HepG2 (cell line): ENCODE measurements at regions of chr11 and their contacts with region 1.

Region 1: GRCh38 chr11:112289588-112290492 is 29.2 kb upstream of the PLET1 start:
- DNase-seq: peak; percentile 21
- ATAC-seq: peak; percentile 99
- H3K4me3 ChIP-seq: peak overlapping the region; percentile 51 to 77 (median 56)
- H3K27ac ChIP-seq: no peak overlapping the region
- H3K4me1 ChIP-seq: peaks cover 13% of the 10 kb centered on the region
- H3K27me3 ChIP-seq: peaks cover 0 to 3% of the 10 kb centered on the region in 2 experiments; a peak in 2 of 5 replicates
- CTCF ChIP-seq: peak; percentile 93
- EP300 ChIP-seq: no peak
- POLR2A ChIP-seq: no peak
- RAD21 ChIP-seq: peak; percentile 94

Region 2: GRCh38 chr11:112453601-112454577 is 164.0 kb after region 1 on chr11:
- CTCF ChIA-PET with region 1: interaction called, 4 read pairs
- POLR2A ChIA-PET with region 1: no interaction called
- in situ Hi-C with region 1: loop called (anchors 5 kb)
- intact Hi-C with region 1: loop called (anchors 2 kb)
- DNase-seq: peak; percentile 29
- ATAC-seq: peak; percentile 79
- H3K4me3 ChIP-seq: no peak overlapping the region
- H3K27ac ChIP-seq: no peak overlapping the region
- H3K4me1 ChIP-seq: no peaks in the 10 kb centered on the region
- H3K27me3 ChIP-seq: no peaks in the 10 kb centered on the region
- CTCF ChIP-seq: peak; percentile 48
- EP300 ChIP-seq: no peak
- POLR2A ChIP-seq: no peak
- RAD21 ChIP-seq: no peak

Region 3: DNA sequence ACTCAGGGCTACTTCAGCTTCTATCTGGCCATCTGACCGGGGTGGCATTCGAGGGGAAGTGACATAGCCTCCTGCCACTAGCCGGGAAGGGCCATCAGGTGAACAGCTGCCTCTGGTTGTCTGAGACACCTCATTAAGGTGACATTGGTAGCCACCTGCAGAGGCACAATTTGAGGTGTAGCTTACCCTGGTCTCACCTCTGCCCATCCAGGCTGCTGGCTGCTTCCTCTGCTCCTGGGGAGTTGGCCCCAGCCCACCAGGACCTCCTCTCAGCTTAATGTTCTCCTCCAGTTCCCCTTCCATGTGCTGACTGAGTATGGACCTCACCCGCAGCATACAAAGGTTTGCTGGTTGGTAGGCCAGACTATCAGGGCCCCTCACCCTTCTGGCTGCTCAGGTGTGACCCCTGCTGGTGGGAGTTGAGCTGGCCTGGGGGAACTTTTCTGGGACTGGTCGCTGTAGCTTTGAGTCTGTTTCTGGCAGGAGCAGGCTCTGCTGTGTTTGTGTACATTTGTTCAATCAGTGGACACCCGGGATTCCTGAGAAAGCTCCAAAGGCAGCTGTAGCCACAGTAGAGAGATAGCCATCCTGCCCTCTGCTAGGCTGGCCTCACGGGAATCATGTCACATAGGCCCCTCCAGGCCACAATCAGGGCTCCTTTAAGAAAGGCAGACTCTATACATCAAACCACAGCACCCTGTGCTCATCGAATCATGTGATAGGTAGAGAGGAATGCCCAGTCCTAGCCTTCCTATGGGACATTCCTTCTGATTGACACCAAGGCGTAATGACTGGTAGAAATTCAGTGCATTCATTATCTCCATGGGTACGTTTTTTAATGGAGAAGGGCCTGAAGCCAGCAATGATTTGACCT is 265.9 kb after region 1 on chr11:
- CTCF ChIA-PET with region 1: interaction called, 15 read pairs
- POLR2A ChIA-PET with region 1: no interaction called
- in situ Hi-C with region 1: loop called (anchors 5 kb)
- intact Hi-C with region 1: loop called (anchors 2 kb)
- DNase-seq: peak; percentile 21
- ATAC-seq: peak; percentile 95
- H3K4me3 ChIP-seq: no peak overlapping the region
- H3K27ac ChIP-seq: no peak overlapping the region
- H3K4me1 ChIP-seq: no peaks in the 10 kb centered on the region
- H3K27me3 ChIP-seq: peaks cover 1 to 5% of the 10 kb centered on the region in 2 experiments; a peak in 2 of 5 replicates
- CTCF ChIP-seq: peak; percentile 83
- EP300 ChIP-seq: no peak
- POLR2A ChIP-seq: no peak
- RAD21 ChIP-seq: peak; percentile 40

Region 4: DNA sequence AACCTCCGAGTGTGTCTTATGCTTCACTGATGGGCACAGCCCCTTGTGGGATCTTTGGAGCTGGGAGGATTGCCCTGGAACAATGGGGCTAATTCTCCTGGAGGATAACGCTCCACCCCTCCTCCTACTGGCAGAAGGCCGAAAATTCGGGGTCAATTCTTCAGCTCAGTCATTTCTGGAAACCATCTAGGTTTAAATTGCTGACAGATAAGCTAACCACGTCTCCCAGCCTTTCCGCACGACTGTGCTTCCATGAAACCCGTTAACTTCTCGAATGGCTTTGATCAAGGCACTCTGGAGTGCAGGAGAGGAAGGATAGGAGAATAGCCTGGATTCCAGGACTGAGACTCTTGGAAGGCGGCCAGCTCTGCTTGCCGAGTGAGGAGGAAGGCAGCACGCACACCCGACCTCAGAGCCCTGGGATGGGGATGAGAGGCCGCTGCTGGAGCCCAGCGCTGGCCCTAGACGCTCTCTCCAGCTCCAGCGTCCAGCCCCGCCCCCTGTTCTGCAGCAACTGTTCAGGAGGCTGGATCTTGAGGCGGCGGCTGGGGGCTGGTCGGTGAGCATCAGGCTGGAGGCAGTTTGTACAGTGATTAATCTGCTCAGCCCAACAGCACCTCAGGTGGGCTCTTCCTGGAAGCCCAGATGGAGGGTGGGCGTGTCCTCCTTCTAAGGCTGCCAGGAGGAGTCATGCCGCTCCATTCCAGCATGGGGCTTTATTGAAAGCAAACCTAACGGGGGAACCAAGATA is 494.7 kb after region 1 on chr11:
- CTCF ChIA-PET with region 1: no interaction called
- POLR2A ChIA-PET with region 1: no interaction called
- in situ Hi-C with region 1: no loop called
- intact Hi-C with region 1: no loop called
- DNase-seq: no peak
- ATAC-seq: no peak
- H3K4me3 ChIP-seq: no peak overlapping the region
- H3K27ac ChIP-seq: no peak overlapping the region
- H3K4me1 ChIP-seq: no peaks in the 10 kb centered on the region
- H3K27me3 ChIP-seq: peaks cover 2 to 12% of the 10 kb centered on the region in 2 experiments; a peak in 4 of 5 replicates
- CTCF ChIP-seq: no peak
- EP300 ChIP-seq: no peak
- POLR2A ChIP-seq: no peak
- RAD21 ChIP-seq: no peak